CD4-positive, alpha-beta memory T cell (primary cell): ENCODE measurements at regions of chr3 and their contacts with region 1.

Region 1: GRCh38 chr3:32684800-32685542 is at the start of gene CNOT10:
- DNase-seq: peak; percentile 95 to 98 (median 97)
- H3K4me3 ChIP-seq: peak within 1 kb of the TSS; percentile 50 to 95
- H3K4me3 Mint-ChIP-seq: peak within 1 kb of the TSS; percentile 90 to 94 (median 93)
- H3K27ac ChIP-seq: peak within 1 kb of the TSS; percentile 80
- H3K27ac Mint-ChIP-seq: peak within 1 kb of the TSS; percentile 87 to 99 (median 97)
- H3K4me1 ChIP-seq: peaks cover 30% of the 10 kb centered on the region
- H3K4me1 Mint-ChIP-seq: peaks cover 28 to 45% (median 37%) of the 10 kb centered on the region in 4 donors
- H3K27me3 ChIP-seq: no peaks in the 10 kb centered on the region
- H3K27me3 Mint-ChIP-seq: no peaks in the 10 kb centered on the region
- total RNA-seq, gene CNOT10: 46.5 to 47.6 TPM

Region 2: GRCh38 chr3:32106280-32106928 is 578.6 kb before region 1 on chr3 and contains the start of gene GPD1L:
- CTCF ChIA-PET with region 1: no interaction called
- POLR2A ChIA-PET with region 1: no interaction called
- intact Hi-C with region 1: loop called (anchors 1 kb)
- DNase-seq: peak; percentile 88 to 91 (median 90)
- H3K4me3 ChIP-seq: peak within 1 kb of the TSS; percentile 12 to 87
- H3K4me3 Mint-ChIP-seq: peak within 1 kb of the TSS; percentile 94 to 98 (median 97)
- H3K27ac ChIP-seq: peak within 1 kb of the TSS; percentile 61
- H3K27ac Mint-ChIP-seq: peak within 1 kb of the TSS; percentile 75 to 95 (median 91)
- H3K4me1 ChIP-seq: peaks cover 33% of the 10 kb centered on the region
- H3K4me1 Mint-ChIP-seq: peaks cover 25 to 49% (median 36%) of the 10 kb centered on the region in 4 donors
- H3K27me3 ChIP-seq: no peaks in the 10 kb centered on the region
- H3K27me3 Mint-ChIP-seq: no peaks in the 10 kb centered on the region
- total RNA-seq, gene GPD1L: 22.7 to 32.5 TPM

Region 3: GRCh38 chr3:32502118-32502945 is 182.6 kb before region 1 on chr3 and contains the start of gene CMTM6:
- CTCF ChIA-PET with region 1: no interaction called
- POLR2A ChIA-PET with region 1: no interaction called
- intact Hi-C with region 1: loop called (anchors 1 kb)
- DNase-seq: peak; percentile 69 to 80 (median 74)
- H3K4me3 ChIP-seq: peak within 1 kb of the TSS; percentile 82 to 89
- H3K4me3 Mint-ChIP-seq: peak within 1 kb of the TSS; percentile 91 to 99 (median 96)
- H3K27ac ChIP-seq: peak within 1 kb of the TSS; percentile 98
- H3K27ac Mint-ChIP-seq: peak within 1 kb of the TSS; percentile 77 to 99 (median 98)
- H3K4me1 ChIP-seq: peaks cover 46% of the 10 kb centered on the region
- H3K4me1 Mint-ChIP-seq: peaks cover 24 to 51% (median 36%) of the 10 kb centered on the region in 4 donors
- H3K27me3 ChIP-seq: no peaks in the 10 kb centered on the region
- H3K27me3 Mint-ChIP-seq: no peaks in the 10 kb centered on the region
- total RNA-seq, gene CMTM6: 30.3 to 34.8 TPM

Region 4: GRCh38 chr3:32570421-32571191 is 114.4 kb before region 1 on chr3 and contains the start of gene DYNC1LI1:
- CTCF ChIA-PET with region 1: interaction called, 3 read pairs
- POLR2A ChIA-PET with region 1: interaction called, 14 read pairs
- intact Hi-C with region 1: loop called (anchors 1 kb)
- DNase-seq: peak; percentile 89 to 90 (median 90)
- H3K4me3 ChIP-seq: peak within 1 kb of the TSS; percentile 90 to 93
- H3K4me3 Mint-ChIP-seq: peak within 1 kb of the TSS; percentile 91 to 97 (median 94)
- H3K27ac ChIP-seq: peak within 1 kb of the TSS; percentile 81
- H3K27ac Mint-ChIP-seq: peak within 1 kb of the TSS; percentile 56 to 97 (median 93)
- H3K4me1 ChIP-seq: peaks cover 32% of the 10 kb centered on the region
- H3K4me1 Mint-ChIP-seq: peaks cover 20 to 42% (median 28%) of the 10 kb centered on the region in 4 donors
- H3K27me3 ChIP-seq: no peaks in the 10 kb centered on the region
- H3K27me3 Mint-ChIP-seq: no peaks in the 10 kb centered on the region
- total RNA-seq, gene DYNC1LI1: 28.4 to 30.1 TPM

Region 5: DNA sequence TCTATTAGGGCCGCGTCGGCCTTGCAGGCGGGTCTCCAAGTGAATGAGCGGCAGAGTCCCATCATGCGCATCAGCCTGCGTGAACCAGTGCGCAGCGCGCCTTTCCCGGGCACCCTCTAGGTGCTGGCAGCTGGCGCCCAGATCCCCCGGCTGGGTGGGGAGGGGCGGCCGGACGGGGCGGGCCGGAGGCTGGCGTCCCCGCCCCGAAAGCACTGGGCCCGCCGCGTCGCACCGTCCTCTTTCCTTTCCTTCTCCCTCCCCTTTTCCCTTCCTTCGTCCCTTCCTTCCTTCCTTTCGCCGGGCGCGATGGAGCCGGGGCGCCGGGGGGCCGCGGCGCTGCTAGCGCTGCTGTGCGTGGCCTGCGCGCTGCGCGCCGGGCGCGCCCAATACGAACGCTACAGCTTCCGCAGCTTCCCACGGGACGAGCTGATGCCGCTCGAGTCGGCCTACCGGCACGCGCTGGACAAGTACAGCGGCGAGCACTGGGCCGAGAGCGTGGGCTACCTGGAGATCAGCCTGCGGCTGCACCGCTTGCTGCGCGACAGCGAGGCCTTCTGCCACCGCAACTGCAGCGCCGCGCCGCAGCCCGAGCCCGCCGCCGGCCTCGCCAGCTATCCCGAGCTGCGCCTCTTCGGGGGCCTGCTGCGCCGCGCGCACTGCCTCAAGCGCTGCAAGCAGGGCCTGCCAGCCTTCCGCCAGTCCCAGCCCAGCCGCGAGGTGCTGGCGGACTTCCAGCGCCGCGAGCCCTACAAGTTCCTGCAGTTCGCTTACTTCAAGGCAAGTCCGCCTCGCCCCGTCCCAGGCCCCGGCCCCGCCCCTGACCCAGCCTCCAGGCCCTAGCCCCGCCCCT is 429.0 kb after region 1 on chr3 and contains the start of gene CRTAP:
- CTCF ChIA-PET with region 1: no interaction called
- POLR2A ChIA-PET with region 1: interaction called, 3 read pairs
- intact Hi-C with region 1: loop called (anchors 10 kb)
- DNase-seq: peak; percentile 85 to 88 (median 87)
- H3K4me3 ChIP-seq: peak within 1 kb of the TSS; percentile 71 to 83
- H3K4me3 Mint-ChIP-seq: peak within 1 kb of the TSS; percentile 83 to 92 (median 89)
- H3K27ac ChIP-seq: peak within 1 kb of the TSS; percentile 55
- H3K27ac Mint-ChIP-seq: peak within 1 kb of the TSS; percentile 75 to 94 (median 91)
- H3K4me1 ChIP-seq: peaks cover 42% of the 10 kb centered on the region
- H3K4me1 Mint-ChIP-seq: peaks cover 32 to 65% (median 48%) of the 10 kb centered on the region in 4 donors
- H3K27me3 ChIP-seq: no peaks in the 10 kb centered on the region
- H3K27me3 Mint-ChIP-seq: no peaks in the 10 kb centered on the region
- total RNA-seq, gene CRTAP: 75.4 to 84.4 TPM

Region 6: GRCh38 chr3:33318709-33319380 is 633.9 kb after region 1 on chr3:
- CTCF ChIA-PET with region 1: no interaction called
- POLR2A ChIA-PET with region 1: no interaction called
- intact Hi-C with region 1: no loop called
- DNase-seq: no peak
- H3K4me3 ChIP-seq: no peak overlapping the region
- H3K4me3 Mint-ChIP-seq: no peak overlapping the region
- H3K27ac ChIP-seq: no peak overlapping the region
- H3K27ac Mint-ChIP-seq: no peak overlapping the region
- H3K4me1 ChIP-seq: no peaks in the 10 kb centered on the region
- H3K4me1 Mint-ChIP-seq: peaks cover 0 to 6% (median 5%) of the 10 kb centered on the region in 4 donors
- H3K27me3 ChIP-seq: no peaks in the 10 kb centered on the region
- H3K27me3 Mint-ChIP-seq: peaks cover 16 to 26% of the 10 kb centered on the region in 2 donors